GM13976 (cell line): ENCODE measurements at regions of chr11 and their contacts with region 1.

Region 1: DNA sequence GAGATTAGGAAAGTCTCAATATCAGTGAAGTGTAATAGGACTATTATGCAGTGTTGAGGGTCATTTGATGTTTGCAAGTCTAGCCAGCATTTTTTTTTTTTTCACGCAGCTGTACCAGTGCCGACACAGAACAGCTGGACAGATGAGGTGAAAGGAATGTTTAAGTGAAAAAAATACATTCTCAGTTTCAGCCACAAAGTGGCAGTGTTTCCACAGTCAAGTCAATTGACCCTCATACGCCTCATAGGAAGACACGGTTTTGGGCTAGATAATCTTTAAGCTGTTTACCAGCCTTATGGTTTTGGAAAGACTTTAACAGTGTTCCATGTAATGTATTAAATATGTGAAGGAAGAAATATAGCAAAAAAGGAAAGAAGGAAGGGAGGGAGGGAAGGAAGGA is 349.9 kb upstream of the ANO3 start:
- DNase-seq: peak; percentile 8
- CTCF ChIP-seq: peak; percentile 35

Region 2: GRCh38 chr11:26127336-26127735 is 145.3 kb after region 1 on chr11:
- in situ Hi-C with region 1: loop called (anchors 10 kb)
- DNase-seq: no peak
- CTCF ChIP-seq: no peak

Region 3: GRCh38 chr11:26227296-26227695 is 245.3 kb after region 1 on chr11:
- in situ Hi-C with region 1: loop called (anchors 10 kb)
- DNase-seq: peak; percentile 30
- CTCF ChIP-seq: peak; percentile 45